Activated CD4-positive, alpha-beta T cell treated with anti-CD3 and anti-CD28 coated beads for 36 hours (primary cell): ENCODE measurements at regions of chr7 and their contacts with region 1.

Region 1: GRCh38 chr7:98280791-98281756 is at the start of gene BRI3:
- DNase-seq: peak; percentile 97
- ATAC-seq: peak; percentile 85
- H3K4me3 Mint-ChIP-seq: peak within 1 kb of the TSS; percentile 78
- H3K27ac Mint-ChIP-seq: peak within 1 kb of the TSS; percentile 76
- H3K4me1 Mint-ChIP-seq: peaks cover 27% of the 10 kb centered on the region
- H3K27me3 Mint-ChIP-seq: no peaks in the 10 kb centered on the region
- total RNA-seq, gene BRI3: 45.1 to 47.6 TPM

Region 2: GRCh38 chr7:97872025-97872669 is 408.9 kb before region 1 on chr7 and contains the start of gene ASNS:
- CTCF ChIA-PET with region 1: no interaction called
- POLR2A ChIA-PET with region 1: no interaction called
- intact Hi-C with region 1: loop called in 1 of 2 experiments (anchors 1 kb)
- DNase-seq: peak; percentile 96
- ATAC-seq: peak; percentile 96
- H3K4me3 Mint-ChIP-seq: peak within 1 kb of the TSS; percentile 92
- H3K27ac Mint-ChIP-seq: peak within 1 kb of the TSS; percentile 82
- H3K4me1 Mint-ChIP-seq: peaks cover 20% of the 10 kb centered on the region
- H3K27me3 Mint-ChIP-seq: no peaks in the 10 kb centered on the region
- total RNA-seq, gene ASNS: 228 to 247 TPM

Region 3: DNA sequence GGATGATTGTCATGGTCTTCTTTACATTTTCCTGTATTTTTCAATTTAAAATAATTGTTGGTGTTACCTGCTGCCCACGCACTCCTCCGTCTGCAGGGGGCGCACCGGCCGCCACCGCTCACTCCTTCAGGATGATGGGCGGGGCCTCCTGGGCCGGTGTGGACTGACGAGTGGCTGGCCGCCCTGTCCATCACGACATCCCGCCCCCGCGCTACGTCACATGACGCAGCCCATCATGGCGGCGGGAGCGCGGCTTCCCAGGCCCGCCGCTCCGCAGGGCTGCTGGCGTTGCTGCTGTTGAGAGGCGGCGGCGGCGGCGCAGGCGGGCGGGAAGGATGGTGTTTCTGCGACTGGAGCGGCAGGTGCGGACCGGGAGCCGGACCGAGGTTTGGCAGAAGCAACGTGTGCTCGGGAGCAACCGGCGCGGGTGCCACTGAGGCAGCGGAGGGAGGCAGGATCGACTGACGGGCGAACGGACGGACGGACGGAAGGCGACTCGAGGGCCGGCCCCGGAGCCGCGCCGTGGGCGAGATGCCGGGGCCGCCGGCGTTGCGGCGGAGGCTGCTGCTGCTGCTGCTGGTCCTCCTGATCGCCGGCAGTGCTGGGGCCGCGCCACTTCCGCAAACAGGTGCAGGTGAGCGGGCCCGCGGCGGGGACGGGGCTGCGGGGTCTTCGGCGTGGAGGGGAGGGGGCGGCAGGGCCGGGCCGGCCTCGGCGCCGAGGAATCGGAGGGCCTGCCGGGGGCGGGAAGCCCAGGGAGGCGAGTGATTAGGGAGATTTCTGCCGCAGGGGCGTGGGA is 174.2 kb before region 1 on chr7 and contains the start of gene LMTK2:
- CTCF ChIA-PET with region 1: no interaction called
- POLR2A ChIA-PET with region 1: interaction called, 3 read pairs
- intact Hi-C with region 1: loop called (anchors 1 to 10 kb)
- DNase-seq: peak; percentile 98
- ATAC-seq: peak; percentile 100
- H3K4me3 Mint-ChIP-seq: peak within 1 kb of the TSS; percentile 95
- H3K27ac Mint-ChIP-seq: peak within 1 kb of the TSS; percentile 90
- H3K4me1 Mint-ChIP-seq: peaks cover 31% of the 10 kb centered on the region
- H3K27me3 Mint-ChIP-seq: peaks cover 6% of the 10 kb centered on the region
- total RNA-seq, gene LMTK2: 10.0 to 16.9 TPM

Region 4: DNA sequence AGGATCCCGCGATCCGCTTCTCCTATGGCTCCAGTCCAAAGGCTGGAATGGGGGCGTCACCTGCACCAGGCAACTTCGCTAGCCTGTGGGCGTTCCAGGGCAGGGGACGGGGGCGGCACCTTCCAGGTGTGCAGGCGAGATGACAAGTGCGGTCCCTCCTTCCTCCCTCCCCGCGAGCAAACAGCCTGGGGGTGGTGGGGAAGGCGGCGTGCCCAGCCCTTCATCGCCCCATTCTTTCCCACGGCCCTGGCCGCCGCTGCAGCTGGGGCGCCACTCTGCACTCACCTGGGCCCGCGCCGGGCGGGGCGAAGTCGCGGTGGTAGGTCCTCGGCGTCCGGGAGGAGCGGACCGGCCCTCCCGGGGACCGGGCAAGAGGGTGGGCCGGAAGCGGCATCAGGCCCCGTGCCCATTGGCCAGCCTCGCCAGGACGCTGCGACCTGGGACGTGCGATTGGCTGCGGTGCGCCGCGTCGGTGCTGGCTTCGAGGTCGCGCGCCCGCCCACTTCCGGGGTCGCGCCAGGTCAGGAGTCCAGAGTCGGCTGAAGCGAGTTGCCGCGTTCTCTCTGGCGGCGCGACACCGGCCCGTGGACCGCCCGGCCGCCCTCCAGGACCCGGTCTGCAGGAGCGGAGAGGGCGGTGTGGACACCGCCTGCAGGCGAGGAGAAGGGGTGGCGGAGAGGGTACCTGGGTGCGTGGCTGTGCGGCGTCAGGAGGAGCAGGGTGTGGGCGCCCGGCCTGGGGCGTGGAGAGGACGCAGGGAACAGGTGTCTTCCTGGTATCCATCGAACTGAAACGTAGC is 29.0 kb before region 1 on chr7 and contains the start of gene TECPR1:
- CTCF ChIA-PET with region 1: no interaction called
- POLR2A ChIA-PET with region 1: interaction called, 5 read pairs
- intact Hi-C with region 1: loop called (anchors 1 kb)
- DNase-seq: peak; percentile 94
- ATAC-seq: peak; percentile 92
- H3K4me3 Mint-ChIP-seq: peak within 1 kb of the TSS; percentile 93
- H3K27ac Mint-ChIP-seq: peak within 1 kb of the TSS; percentile 98
- H3K4me1 Mint-ChIP-seq: peaks cover 50% of the 10 kb centered on the region
- H3K27me3 Mint-ChIP-seq: no peaks in the 10 kb centered on the region
- total RNA-seq, gene TECPR1: 21.8 to 26.5 TPM

Region 5: DNA sequence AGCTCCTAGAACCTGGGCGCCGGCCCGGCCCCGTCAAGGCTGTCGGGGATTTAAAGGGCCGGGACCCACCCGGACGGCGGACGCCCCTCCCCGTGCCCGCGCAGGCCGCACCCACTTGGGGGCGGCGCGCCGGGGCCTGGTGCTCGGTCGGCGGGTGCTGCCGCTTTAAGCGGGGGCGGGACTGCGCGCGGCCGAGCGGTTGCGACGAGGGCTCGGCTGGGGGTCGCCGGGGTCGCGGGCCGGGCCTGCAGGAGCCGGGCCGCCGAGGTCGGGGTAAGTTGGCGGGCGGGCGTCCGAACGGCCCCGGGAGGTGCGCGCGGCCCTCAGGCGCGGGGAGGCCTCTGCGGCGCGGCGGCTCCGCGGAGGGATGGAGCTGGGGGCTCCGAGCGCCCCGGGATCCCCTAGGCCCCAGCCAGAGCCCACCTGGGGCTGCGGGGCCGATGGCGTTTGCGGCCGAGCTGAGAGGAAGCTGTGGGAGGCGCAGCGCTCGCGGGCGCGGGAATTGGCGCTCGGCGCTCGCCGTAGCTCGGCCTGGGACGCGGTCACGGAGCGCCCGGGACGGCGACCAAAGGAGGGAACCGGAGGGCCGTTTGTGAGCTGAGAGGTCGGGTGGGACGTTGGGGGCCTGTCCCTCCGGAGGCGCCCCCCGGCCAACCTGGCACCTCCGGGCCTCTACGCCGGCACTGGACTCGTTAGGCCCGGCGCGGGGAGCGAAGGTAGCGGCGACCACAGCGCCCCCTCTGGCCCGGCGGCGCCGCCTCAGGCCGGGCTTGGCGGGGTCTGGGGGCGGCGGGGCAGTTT is 597.5 kb after region 1 on chr7 and contains the start of gene TRRAP:
- CTCF ChIA-PET with region 1: no interaction called
- POLR2A ChIA-PET with region 1: no interaction called
- intact Hi-C with region 1: loop called in 1 of 2 experiments (anchors 1 kb)
- DNase-seq: peak; percentile 88
- ATAC-seq: peak; percentile 67
- H3K4me3 Mint-ChIP-seq: peak within 1 kb of the TSS; percentile 91
- H3K27ac Mint-ChIP-seq: peak within 1 kb of the TSS; percentile 96
- H3K4me1 Mint-ChIP-seq: peaks cover 30% of the 10 kb centered on the region
- H3K27me3 Mint-ChIP-seq: no peaks in the 10 kb centered on the region
- total RNA-seq, gene TRRAP: 51.7 to 54.0 TPM

Region 6: GRCh38 chr7:99380032-99380822 is 1099.2 kb after region 1 on chr7:
- CTCF ChIA-PET with region 1: no interaction called
- POLR2A ChIA-PET with region 1: no interaction called
- intact Hi-C with region 1: loop called in 1 of 2 experiments (anchors 5 kb)
- DNase-seq: peak; percentile 69
- ATAC-seq: peak; percentile 22
- H3K4me3 Mint-ChIP-seq: peak overlapping the region; percentile 78
- H3K27ac Mint-ChIP-seq: peak overlapping the region; percentile 96
- H3K4me1 Mint-ChIP-seq: peaks cover 62% of the 10 kb centered on the region
- H3K27me3 Mint-ChIP-seq: no peaks in the 10 kb centered on the region